ENCODE measurements at regions of chr2 and their contacts with region 1.

Region 1: DNA sequence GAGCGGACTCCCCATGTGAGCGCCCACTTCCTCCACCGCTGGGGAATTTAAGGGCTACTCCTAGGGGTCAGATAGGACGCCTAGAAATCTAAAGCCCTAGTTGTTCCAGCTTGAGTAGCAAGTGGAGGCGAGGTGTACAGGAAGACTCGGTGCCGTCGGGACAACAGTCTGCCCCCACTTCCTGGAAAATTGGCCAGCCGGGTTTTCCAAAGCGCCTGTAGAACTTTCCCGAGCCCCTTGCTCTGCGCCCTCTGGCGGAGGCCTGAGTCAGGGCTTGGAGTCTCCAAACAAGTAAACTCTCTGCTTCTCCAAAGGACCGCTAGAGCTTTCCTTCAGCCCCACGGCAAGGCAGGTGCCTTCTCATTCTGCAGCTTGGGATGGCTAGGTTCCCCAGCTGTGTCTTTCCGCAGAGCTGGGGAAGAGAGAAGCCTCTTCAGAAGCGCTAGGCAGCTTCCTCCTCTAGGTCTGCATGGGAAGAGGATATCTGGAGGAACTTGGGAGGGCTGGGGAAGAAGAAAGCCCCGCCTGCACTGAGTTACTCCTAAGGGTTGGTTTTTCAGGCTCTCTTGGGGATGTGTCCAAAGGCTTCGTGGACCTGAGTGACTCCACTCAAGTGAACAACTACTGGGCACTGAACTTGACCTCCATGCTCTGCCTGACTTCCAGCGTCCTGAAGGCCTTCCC is 688 bp downstream of the SPR start:
- H3K4me3 Mint-ChIP-seq: peak overlapping the region; percentile 73
- H3K27ac Mint-ChIP-seq: peak overlapping the region; percentile 22
- H3K4me1 Mint-ChIP-seq: peaks cover 55% of the 10 kb centered on the region
- H3K27me3 Mint-ChIP-seq: peaks cover 52% of the 10 kb centered on the region

Region 2: GRCh38 chr2:72973566-72974435 is 85.9 kb after region 1 on chr2:
- intact Hi-C with region 1: loop called (anchors 1 kb)
- H3K4me3 Mint-ChIP-seq: no peak overlapping the region
- H3K27ac Mint-ChIP-seq: no peak overlapping the region
- H3K4me1 Mint-ChIP-seq: peaks cover 26% of the 10 kb centered on the region
- H3K27me3 Mint-ChIP-seq: no peaks in the 10 kb centered on the region

Region 3: DNA sequence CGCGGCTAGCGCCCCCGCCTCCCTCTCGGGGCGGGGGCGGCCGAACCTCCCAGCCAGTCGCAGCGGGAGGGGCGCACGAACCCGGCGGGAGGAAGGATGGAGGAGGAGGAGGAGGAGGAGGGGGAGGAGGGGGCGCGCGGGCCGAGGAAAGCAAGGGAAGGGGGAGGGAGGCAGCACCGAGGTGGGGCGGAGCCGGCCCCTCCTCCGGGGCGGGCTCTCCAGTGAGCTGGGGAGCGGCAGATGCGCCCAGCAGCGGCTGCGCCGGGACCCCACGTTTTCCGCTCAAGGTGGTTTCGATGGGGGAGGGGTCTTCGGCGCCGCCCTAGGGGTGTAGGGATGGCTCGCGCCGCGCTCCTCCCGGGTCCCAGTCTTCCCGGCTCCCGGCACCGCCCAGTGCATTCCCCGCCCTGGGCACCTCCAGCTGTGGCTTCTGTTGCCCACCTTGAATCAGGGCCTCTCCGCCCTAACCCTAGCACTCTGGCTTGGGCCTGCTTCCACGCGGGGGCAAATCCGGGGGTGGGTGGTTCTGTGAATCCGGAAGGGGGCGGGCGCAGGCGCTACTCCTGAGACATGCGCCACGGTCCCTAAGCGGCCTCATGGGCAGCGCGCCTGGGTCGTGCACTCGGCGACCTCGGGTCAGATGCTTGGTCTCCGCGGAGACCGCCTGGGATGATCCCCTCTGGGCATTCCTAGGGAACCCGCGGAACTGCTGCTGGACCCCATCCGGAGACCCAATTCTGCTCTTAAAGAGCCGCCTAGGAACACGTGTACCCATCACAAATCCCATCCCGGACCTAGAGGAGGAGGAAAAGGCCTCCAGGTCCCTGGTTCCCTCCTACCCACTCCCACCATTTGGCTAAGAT is 396.6 kb after region 1 on chr2 and contains the start of gene FBXO41:
- intact Hi-C with region 1: loop called (anchors 10 kb)
- H3K4me3 Mint-ChIP-seq: peak within 1 kb of the TSS; percentile 72
- H3K27ac Mint-ChIP-seq: peak within 1 kb of the TSS; percentile 79
- H3K4me1 Mint-ChIP-seq: peaks cover 45% of the 10 kb centered on the region
- H3K27me3 Mint-ChIP-seq: peaks cover 16% of the 10 kb centered on the region

Measured in dendritic cell treated with granulocyte-macrophage colony-stimulating factor and Interleukin-4, amounts not matched to agents 40 ng/mL and 50 ng/mL, for 4 days (primary cell).